Esophagus muscularis mucosa (tissue), 4 donors: ENCODE measurements at regions of chr20 and their contacts with region 1.

Region 1: DNA sequence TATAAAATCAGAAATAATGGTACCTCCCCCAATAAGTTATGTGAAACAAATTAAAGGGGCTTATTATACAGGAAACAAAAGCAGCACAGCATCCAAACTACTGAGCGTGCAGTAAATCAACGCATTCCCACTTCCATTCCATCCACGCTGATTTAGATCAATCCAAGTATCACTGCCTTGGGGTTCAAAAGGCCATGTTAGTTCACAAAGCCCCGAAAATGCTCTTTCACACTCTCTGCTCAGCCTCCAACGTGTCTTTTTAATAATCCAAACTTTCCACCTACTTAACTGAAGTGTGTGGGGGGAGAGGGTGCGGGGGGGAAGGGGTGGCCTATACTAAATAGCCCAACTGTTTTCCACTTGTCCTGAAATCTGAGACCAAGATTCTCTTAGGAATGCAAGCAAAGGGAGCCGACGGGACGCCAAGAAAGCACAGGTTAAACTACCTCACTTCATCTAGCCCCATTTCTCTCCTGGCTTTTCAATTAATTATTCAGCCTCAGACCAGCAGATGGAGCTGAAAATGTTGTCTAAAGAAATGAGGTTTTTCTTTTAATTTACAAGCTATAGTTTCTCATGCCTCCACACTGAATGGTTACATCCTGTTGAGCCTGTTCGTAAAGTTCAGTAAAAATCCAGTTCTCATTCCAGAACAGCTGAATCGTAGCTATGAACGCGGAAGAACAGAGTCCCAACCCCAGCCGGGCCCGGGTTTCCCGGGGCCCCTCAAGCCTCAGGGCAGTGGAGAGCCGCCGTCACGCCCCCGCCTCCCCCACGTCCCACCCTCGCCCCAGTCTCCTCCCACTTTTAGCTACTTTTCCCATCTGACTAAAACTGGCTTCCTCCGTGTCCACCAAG is 1.0 kb upstream of the NXT1 start:
- DNase-seq: peak; percentile 97
- H3K4me3 ChIP-seq: peak overlapping the region; percentile 93 to 98 (median 96)
- H3K27ac ChIP-seq: peak overlapping the region; percentile 91 to 99 (median 96)
- H3K4me1 ChIP-seq: peaks cover 19 to 31% (median 29%) of the 10 kb centered on the region in 4 donors
- H3K27me3 ChIP-seq: no peaks in the 10 kb centered on the region
- CTCF ChIP-seq: peak; percentile 47 to 56 (median 55)
- EP300 ChIP-seq: no peak
- POLR2A ChIP-seq: no peak

Region 2: DNA sequence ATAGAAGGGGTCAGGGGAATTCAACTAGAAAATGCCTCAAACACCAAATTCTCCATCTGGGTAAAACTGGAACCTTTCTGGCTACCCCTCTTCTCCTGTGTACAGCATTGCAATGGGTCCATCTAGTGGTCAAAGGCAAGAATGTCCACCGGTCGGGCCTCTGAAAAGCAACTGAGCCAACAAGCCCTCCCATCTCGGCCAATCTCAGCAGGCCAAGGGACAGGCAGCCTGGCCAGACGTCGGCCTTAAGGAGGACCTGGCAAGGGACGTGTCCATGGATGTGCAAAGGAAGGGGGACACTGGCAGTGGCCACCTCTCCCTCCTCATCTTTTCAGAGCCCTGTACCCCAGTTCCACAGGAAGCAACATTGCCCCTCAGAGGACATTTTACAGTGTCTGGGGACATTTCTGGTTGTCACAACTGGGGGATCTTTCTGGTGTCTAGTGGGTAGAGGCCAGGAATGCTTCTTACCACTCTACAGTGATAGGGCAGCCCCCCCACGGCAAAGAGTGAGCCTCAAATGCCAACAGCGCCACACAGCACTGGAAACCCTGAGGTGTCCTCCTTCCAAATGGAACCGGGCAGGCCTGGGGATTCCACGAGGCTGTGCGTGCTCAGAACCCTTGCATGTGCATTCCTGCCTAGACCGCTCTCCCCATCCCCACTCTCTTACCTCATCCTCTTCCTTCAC is 665.4 kb before region 1 on chr20:
- intact Hi-C with region 1: loop called (anchors 5 kb)
- DNase-seq: peak; percentile 94
- H3K4me3 ChIP-seq: no peak overlapping the region
- H3K27ac ChIP-seq: no peak overlapping the region
- H3K4me1 ChIP-seq: peaks cover 0 to 3% (median 1%) of the 10 kb centered on the region in 4 donors
- H3K27me3 ChIP-seq: peaks cover 0 to 31% (median 0%) of the 10 kb centered on the region in 4 donors
- CTCF ChIP-seq: peak; percentile 71 to 85 (median 76)
- EP300 ChIP-seq: no peak
- POLR2A ChIP-seq: no peak

Region 3: GRCh38 chr20:23050847-23051631 is 298.5 kb before region 1 on chr20:
- intact Hi-C with region 1: loop called (anchors 10 kb)
- DNase-seq: no peak
- H3K4me3 ChIP-seq: peak overlapping the region; percentile 56 to 65 (median 60)
- H3K27ac ChIP-seq: peak overlapping the region; percentile 69 to 85 (median 82)
- H3K4me1 ChIP-seq: peaks cover 16 to 53% (median 45%) of the 10 kb centered on the region in 4 donors
- H3K27me3 ChIP-seq: peaks cover 0 to 56% (median 12%) of the 10 kb centered on the region in 4 donors
- CTCF ChIP-seq: peak; percentile 50 to 54 (median 52)
- EP300 ChIP-seq: no peak
- POLR2A ChIP-seq: no peak

Region 4: GRCh38 chr20:23425129-23425528 is 75.6 kb after region 1 on chr20:
- intact Hi-C with region 1: no loop called
- DNase-seq: peak; percentile 24
- H3K4me3 ChIP-seq: no peak overlapping the region
- H3K27ac ChIP-seq: no peak overlapping the region
- H3K4me1 ChIP-seq: peaks cover 4 to 5% (median 4%) of the 10 kb centered on the region in 4 donors
- H3K27me3 ChIP-seq: peaks cover 0 to 4% (median 0%) of the 10 kb centered on the region in 4 donors
- CTCF ChIP-seq: no peak
- EP300 ChIP-seq: no peak
- POLR2A ChIP-seq: no peak

Region 5: GRCh38 chr20:23613676-23614075 is 264.1 kb after region 1 on chr20:
- intact Hi-C with region 1: loop called (anchors 5 kb)
- DNase-seq: peak; percentile 91
- H3K4me3 ChIP-seq: no peak overlapping the region
- H3K27ac ChIP-seq: peak overlapping the region; percentile 57 to 76 (median 64)
- H3K4me1 ChIP-seq: peaks cover 0 to 35% (median 30%) of the 10 kb centered on the region in 4 donors
- H3K27me3 ChIP-seq: no peaks in the 10 kb centered on the region
- CTCF ChIP-seq: no peak
- EP300 ChIP-seq: no peak
- POLR2A ChIP-seq: no peak